ENCODE measurements at regions of chr5 and their contacts with region 1.

Region 1: GRCh38 chr5:134904630-134905245 is at the start of gene PCBD2:
- DNase-seq: peak; percentile 92
- H3K4me3 Mint-ChIP-seq: peak within 1 kb of the TSS; percentile 94
- H3K27ac Mint-ChIP-seq: peak within 1 kb of the TSS; percentile 99
- H3K4me1 Mint-ChIP-seq: peaks cover 16% of the 10 kb centered on the region
- H3K27me3 Mint-ChIP-seq: no peaks in the 10 kb centered on the region
- total RNA-seq, gene PCBD2: 13.3 and 14.1 TPM in 2 replicates

Region 2: GRCh38 chr5:134637161-134637582 is 267.6 kb before region 1 on chr5:
- intact Hi-C with region 1: loop called (anchors 10 kb)
- DNase-seq: no peak
- H3K4me3 Mint-ChIP-seq: no peak overlapping the region
- H3K27ac Mint-ChIP-seq: no peak overlapping the region
- H3K4me1 Mint-ChIP-seq: peaks cover 9% of the 10 kb centered on the region
- H3K27me3 Mint-ChIP-seq: no peaks in the 10 kb centered on the region

Region 3: DNA sequence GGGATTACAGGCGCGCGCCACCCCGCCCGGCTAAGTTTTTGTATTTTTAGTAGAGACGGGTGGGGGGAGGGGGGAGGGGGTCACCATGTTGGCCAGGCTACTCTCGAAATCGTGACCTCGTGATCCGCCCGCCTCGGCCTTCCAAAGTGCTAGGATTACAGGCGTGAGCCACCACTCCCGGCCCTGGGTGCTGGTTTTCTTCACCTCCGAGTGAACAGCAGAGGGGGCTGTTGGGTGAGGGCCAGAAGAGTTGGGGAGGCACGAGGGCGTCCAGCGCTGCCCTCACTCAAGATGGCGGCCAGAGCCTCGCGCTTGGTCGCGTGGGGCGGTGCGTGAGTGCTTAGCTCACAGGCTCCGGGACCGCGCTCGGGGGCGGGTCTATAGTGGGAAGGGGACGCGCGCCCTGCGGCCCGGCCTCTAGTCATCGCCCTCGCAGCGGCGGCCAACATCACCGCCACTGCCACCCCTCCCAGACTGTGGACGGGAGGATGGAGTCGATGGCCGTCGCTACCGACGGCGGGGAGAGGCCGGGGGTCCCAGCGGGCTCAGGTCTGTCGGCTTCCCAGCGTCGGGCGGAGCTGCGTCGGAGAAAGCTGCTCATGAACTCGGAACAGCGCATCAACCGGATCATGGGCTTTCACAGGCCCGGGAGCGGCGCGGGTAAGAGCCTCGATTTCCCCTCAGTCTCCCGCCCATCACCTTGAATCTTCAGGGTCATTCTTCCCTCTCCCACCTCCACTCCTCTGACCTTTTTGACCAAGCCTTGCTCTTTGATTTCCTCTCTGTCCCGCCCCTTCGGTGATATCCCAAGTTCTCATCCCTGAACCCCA is 166.4 kb before region 1 on chr5 and contains the start of gene CAMLG:
- intact Hi-C with region 1: loop called (anchors 1 kb)
- DNase-seq: peak; percentile 97
- H3K4me3 Mint-ChIP-seq: peak within 1 kb of the TSS; percentile 91
- H3K27ac Mint-ChIP-seq: peak within 1 kb of the TSS; percentile 87
- H3K4me1 Mint-ChIP-seq: peaks cover 16% of the 10 kb centered on the region
- H3K27me3 Mint-ChIP-seq: no peaks in the 10 kb centered on the region
- total RNA-seq, gene CAMLG: 28.1 and 29.1 TPM in 2 replicates

Region 4: GRCh38 chr5:134758504-134759341 is 146.0 kb before region 1 on chr5 and contains the start of gene DDX46:
- intact Hi-C with region 1: loop called (anchors 2 kb)
- DNase-seq: peak; percentile 94
- H3K4me3 Mint-ChIP-seq: peak within 1 kb of the TSS; percentile 100
- H3K27ac Mint-ChIP-seq: peak within 1 kb of the TSS; percentile 97
- H3K4me1 Mint-ChIP-seq: peaks cover 24% of the 10 kb centered on the region
- H3K27me3 Mint-ChIP-seq: no peaks in the 10 kb centered on the region
- total RNA-seq, gene DDX46: 75.2 and 83.9 TPM in 2 replicates

Region 5: GRCh38 chr5:134845852-134846640 is 58.7 kb before region 1 on chr5 and contains the start of gene C5orf24:
- intact Hi-C with region 1: loop called (anchors 1 kb)
- DNase-seq: peak; percentile 91
- H3K4me3 Mint-ChIP-seq: peak within 1 kb of the TSS; percentile 94
- H3K27ac Mint-ChIP-seq: peak within 1 kb of the TSS; percentile 97
- H3K4me1 Mint-ChIP-seq: peaks cover 22% of the 10 kb centered on the region
- H3K27me3 Mint-ChIP-seq: no peaks in the 10 kb centered on the region
- total RNA-seq, gene C5orf24: 36.0 and 40.5 TPM in 2 replicates

Region 6: DNA sequence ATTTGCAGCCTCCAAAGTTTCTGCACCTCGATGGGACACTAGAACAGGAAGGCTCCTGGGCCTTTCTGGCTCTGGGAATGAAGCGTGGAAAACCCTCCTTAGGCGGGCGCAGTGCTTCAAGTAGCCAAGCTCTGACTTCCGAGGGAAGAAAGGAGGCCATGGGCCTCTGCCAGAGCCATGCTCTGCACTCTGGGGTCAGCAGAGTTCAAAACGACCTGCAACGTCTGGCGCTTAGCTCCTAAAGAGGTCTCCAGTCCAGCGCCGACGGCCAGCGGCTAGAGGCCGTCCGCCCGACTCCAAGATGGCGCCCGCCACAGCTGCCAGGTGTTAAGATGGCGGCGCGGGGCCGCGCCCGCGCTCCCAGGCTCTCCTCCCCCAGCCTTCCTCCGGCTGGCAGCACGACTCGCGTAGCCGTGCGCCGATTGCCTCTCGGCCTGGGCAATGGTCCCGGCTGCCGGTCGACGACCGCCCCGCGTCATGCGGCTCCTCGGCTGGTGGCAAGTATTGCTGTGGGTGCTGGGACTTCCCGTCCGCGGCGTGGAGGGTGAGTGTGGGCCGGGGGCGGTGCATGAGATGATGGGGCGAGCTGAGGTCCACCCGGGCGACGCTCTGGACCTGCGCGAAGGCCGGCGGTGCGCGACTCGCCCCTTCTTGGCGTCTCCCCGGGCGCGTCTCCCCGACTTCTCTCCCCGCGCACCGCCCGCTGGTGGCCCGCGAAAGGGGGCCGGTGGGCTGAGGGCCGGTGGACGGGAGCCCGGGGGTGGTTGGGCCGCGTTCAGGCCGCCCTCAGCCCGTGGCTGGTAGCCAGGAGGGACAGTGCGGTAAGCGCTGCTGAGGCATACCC is 30.5 kb before region 1 on chr5 and contains the start of gene TXNDC15:
- intact Hi-C with region 1: loop called (anchors 1 kb)
- DNase-seq: peak; percentile 80
- H3K4me3 Mint-ChIP-seq: peak within 1 kb of the TSS; percentile 95
- H3K27ac Mint-ChIP-seq: peak within 1 kb of the TSS; percentile 96
- H3K4me1 Mint-ChIP-seq: peaks cover 28% of the 10 kb centered on the region
- H3K27me3 Mint-ChIP-seq: no peaks in the 10 kb centered on the region
- total RNA-seq, gene TXNDC15: 53.9 and 56.9 TPM in 2 replicates

Region 7: GRCh38 chr5:134920848-134921575 is 16.3 kb after region 1 on chr5:
- intact Hi-C with region 1: loop called (anchors 1 kb)
- DNase-seq: no peak
- H3K4me3 Mint-ChIP-seq: no peak overlapping the region
- H3K27ac Mint-ChIP-seq: peak overlapping the region; percentile 77
- H3K4me1 Mint-ChIP-seq: peaks cover 41% of the 10 kb centered on the region
- H3K27me3 Mint-ChIP-seq: no peaks in the 10 kb centered on the region

Measured in activated T-helper 2 cell treated with anti-CD3 and anti-CD28 coated beads, Interferon-gamma antibody, Interleukin-2, Interleukin-4, amounts not matched to agents 10 μg/mL and 5 μg/mL and 100 μg/mL, durations not matched to agents 14 hours and 24 hours and 36 hours (primary cell).